ENCODE measurements at regions of chr6 and their contacts with region 1.

Region 1: DNA sequence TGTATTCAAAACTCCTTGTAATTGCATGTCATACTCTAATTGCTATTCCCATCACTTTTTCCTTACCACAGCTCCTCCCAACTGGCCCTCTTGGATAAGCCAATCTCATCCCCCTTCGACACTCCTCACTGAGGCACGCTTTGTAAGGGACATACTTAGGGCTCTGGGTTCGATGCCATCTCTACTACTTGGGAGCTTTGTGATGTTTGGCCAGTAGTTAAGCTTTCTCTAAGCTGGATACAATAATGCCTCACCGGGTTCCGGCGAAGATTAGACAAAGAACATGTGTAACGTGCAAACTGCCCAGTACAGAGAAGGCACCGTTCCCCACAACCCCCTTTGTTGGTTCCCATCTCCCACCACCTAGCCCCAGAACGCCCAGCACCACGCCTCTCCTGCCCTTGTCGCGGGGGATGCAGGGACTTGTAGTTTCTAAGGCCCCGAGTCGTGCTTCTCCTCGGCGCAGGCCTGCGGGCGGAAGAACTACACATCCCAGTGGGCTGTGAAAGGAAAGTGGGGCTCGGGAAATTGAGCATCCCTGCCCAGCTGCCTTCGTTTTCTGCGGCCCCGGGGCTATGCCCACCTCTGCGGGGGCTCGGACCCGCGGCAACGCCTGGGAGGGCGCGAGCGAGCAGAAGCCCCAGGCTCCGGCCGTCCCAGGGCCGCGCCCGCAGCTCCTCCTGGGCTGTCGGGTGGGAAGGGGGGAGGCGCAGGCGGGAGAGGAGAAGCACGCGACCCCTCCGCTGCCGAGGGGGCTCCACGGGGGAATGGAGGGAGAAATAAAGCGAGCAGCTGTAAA is 1.1 kb upstream of the ZDHHC14 start:
- DNase-seq: peak; percentile 83 to 92 (median 85)
- H3K4me3 ChIP-seq: peak overlapping the region; percentile 76 to 83
- H3K4me3 Mint-ChIP-seq: peak overlapping the region; percentile 77 to 91 (median 86)
- H3K27ac ChIP-seq: peak overlapping the region; percentile 66
- H3K27ac Mint-ChIP-seq: peak overlapping the region; percentile 37 to 80 (median 66)
- H3K4me1 ChIP-seq: peaks cover 15% of the 10 kb centered on the region
- H3K4me1 Mint-ChIP-seq: peaks cover 11 to 17% (median 14%) of the 10 kb centered on the region in 4 donors
- H3K27me3 ChIP-seq: no peaks in the 10 kb centered on the region
- H3K27me3 Mint-ChIP-seq: peaks cover 0 to 3% of the 10 kb centered on the region in 2 donors

Region 2: DNA sequence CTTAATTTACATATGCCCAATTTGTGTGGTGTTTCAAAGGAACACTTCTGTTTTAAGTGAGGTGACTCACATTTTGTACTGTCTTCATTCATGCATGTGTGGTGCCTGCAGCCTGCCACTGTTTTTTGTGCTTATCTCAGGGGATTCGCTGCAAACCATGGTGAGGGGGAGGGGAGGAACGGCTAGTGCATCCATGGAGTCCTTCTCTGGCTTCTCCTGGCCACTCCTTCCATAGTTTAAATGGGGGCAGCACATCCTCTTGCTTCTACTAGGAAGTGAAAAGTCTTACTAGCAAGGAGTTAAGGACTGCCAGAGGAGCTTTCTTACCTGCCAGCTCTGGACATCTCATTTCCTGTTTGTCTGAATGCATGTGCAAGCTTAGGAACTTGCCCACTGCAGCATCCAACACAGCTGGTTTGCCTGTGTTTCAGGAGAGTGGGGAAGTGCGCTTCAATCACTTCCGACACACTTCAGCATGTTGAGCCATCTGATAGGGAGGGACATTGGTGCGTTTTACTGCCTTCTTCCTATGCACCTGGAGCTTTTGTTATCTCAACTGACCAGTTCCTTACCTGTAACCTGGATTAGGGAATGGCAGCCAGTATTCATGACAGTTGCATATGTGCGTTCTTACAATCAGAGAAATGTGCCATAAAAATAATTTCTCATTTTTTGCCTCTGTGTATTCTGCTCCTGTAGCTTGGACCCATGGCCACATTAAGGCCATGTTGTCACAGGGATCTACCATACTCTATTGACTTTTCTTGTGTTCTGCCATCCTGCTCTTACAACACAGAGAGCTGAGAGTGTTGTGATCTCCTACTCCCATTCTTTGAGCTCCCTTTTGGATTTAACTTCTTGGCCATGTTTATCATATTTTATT is 391.3 kb before region 1 on chr6:
- CTCF ChIA-PET with region 1: no interaction called
- POLR2A ChIA-PET with region 1: no interaction called
- intact Hi-C with region 1: no loop called
- DNase-seq: no peak
- H3K4me3 ChIP-seq: no peak overlapping the region
- H3K4me3 Mint-ChIP-seq: peak overlapping the region in 1 of 8 donors; percentile 44
- H3K27ac ChIP-seq: no peak overlapping the region
- H3K27ac Mint-ChIP-seq: peak overlapping the region in 4 of 7 donors; percentile 2 to 43 (median 40)
- H3K4me1 ChIP-seq: peaks cover 50% of the 10 kb centered on the region
- H3K4me1 Mint-ChIP-seq: peaks cover 37 to 71% (median 59%) of the 10 kb centered on the region in 4 donors
- H3K27me3 ChIP-seq: no peaks in the 10 kb centered on the region
- H3K27me3 Mint-ChIP-seq: no peaks in the 10 kb centered on the region

Region 3: DNA sequence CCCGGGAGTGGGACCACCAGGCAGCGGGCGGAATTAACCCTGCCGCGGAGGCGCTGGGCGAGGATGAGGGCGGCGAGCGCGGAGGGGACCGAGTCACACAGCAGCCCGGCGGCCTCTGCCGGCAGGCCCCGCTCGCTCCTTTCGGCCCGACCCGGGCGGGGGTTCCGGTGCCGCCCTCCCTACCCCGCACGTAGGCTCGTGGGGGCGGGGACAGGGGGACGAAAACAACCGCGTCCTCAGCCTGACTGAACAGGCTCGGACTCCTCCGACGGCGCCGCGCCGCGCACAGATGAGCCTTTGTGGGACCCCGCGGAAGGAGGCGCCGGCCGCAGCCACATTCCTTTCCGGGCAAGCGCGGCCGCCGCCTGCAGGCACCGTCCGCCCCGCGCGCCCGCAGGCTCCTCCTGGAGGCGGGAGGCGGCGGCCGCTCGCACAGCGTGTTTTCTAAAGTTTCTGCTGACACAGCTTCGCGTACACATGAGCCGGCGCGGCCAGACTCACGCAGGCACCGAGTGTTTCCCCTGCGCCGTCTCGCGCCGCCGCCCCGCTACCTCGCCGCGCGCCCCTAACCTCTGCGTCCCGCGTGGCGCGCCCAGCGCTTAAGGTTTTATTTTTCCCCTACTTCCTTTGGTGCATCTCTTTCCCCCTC is 358.4 kb before region 1 on chr6:
- CTCF ChIA-PET with region 1: no interaction called
- POLR2A ChIA-PET with region 1: interaction called, 4 read pairs
- intact Hi-C with region 1: loop called (anchors 2 kb)
- DNase-seq: peak; percentile 88 to 93 (median 91)
- H3K4me3 ChIP-seq: peak overlapping the region; percentile 54 to 86
- H3K4me3 Mint-ChIP-seq: peak overlapping the region; percentile 95 to 98 (median 96)
- H3K27ac ChIP-seq: peak overlapping the region; percentile 98
- H3K27ac Mint-ChIP-seq: peak overlapping the region; percentile 97 to 100 (median 99)
- H3K4me1 ChIP-seq: peaks cover 31% of the 10 kb centered on the region
- H3K4me1 Mint-ChIP-seq: peaks cover 30 to 55% (median 44%) of the 10 kb centered on the region in 4 donors
- H3K27me3 ChIP-seq: no peaks in the 10 kb centered on the region
- H3K27me3 Mint-ChIP-seq: no peaks in the 10 kb centered on the region

Region 4: DNA sequence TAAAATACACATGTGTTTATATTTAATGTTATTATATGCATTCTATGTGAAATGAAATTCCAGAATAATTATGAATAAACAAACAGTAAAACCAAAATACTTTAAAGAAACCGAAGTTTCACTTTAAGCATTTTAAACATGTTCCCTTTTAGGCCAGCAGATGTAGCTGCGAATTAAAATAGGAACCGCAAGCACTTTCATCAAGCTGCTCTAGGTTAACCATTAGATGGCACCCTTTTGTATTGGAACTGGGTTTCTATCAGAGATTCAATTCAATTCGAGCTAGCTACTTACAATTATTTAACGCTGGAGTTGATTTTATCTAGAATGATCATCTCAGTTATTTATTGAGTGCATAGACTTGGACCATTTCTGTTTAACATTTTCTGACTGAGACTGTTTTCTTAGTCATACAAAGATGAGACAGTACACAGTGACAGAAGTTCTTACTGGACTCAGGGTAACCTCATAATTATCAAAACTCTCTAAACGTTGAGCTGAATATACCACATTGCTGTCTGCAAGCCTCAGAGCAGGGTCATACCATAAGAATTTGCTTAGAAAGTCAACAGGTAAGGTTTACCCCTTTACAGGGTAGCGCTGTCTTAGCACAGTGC is 65.0 kb before region 1 on chr6:
- CTCF ChIA-PET with region 1: interaction called, 4 read pairs
- POLR2A ChIA-PET with region 1: no interaction called
- intact Hi-C with region 1: loop called (anchors 2 kb)
- DNase-seq: peak; percentile 39 to 62 (median 58)
- H3K4me3 ChIP-seq: no peak overlapping the region
- H3K4me3 Mint-ChIP-seq: no peak overlapping the region
- H3K27ac ChIP-seq: no peak overlapping the region
- H3K27ac Mint-ChIP-seq: peak overlapping the region in 4 of 7 donors; percentile 14 to 41 (median 22)
- H3K4me1 ChIP-seq: peaks cover 10% of the 10 kb centered on the region
- H3K4me1 Mint-ChIP-seq: peaks cover 0 to 7% (median 6%) of the 10 kb centered on the region in 4 donors
- H3K27me3 ChIP-seq: no peaks in the 10 kb centered on the region
- H3K27me3 Mint-ChIP-seq: no peaks in the 10 kb centered on the region

Region 5: GRCh38 chr6:157323255-157323965 is 56.4 kb before region 1 on chr6 and contains the start of gene TMEM242:
- CTCF ChIA-PET with region 1: interaction called, 9 read pairs
- POLR2A ChIA-PET with region 1: interaction called, 60 read pairs
- intact Hi-C with region 1: loop called (anchors 1 kb)
- DNase-seq: peak; percentile 77 to 86 (median 83)
- H3K4me3 ChIP-seq: peak within 1 kb of the TSS; percentile 79 to 82
- H3K4me3 Mint-ChIP-seq: peak within 1 kb of the TSS; percentile 94 to 97 (median 96)
- H3K27ac ChIP-seq: peak within 1 kb of the TSS; percentile 62
- H3K27ac Mint-ChIP-seq: peak within 1 kb of the TSS; percentile 89 to 94 (median 92)
- H3K4me1 ChIP-seq: peaks cover 16% of the 10 kb centered on the region
- H3K4me1 Mint-ChIP-seq: peaks cover 13 to 27% (median 17%) of the 10 kb centered on the region in 4 donors
- H3K27me3 ChIP-seq: no peaks in the 10 kb centered on the region
- H3K27me3 Mint-ChIP-seq: peaks cover 5 to 10% of the 10 kb centered on the region in 2 donors
- total RNA-seq, gene TMEM242: 12.7 to 14.1 TPM

Region 6: DNA sequence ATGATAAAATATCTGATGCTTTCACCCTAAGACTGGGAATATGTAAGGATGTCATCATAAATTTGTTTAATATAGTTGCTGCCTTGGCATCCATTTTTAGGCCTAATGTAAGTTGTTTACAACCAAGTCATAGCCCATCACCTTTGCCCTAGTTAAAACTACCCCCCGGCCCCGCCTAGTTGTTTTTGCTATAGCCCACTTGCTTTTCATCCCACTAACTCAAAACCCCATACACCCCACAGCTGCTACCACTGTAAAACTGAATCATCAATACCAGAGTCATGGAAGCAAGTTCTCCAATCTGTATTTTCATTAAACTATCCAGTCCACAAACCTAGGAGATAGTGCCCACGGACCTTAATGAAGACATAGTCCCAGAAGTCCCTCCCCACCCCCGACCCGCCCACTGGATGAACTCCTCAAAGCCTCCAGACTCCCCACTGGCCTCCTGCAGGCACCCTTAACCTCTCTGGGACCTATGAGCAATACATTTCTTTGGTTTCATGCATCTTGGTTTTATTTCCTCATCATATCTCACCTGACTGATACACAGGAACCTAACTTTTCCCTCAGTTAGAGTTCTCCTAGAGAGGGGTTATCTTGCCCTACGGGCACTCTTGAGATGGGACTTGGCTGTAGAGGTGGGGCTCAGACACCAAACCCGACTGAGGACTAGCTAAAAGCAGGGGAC is 11.4 kb before region 1 on chr6:
- CTCF ChIA-PET with region 1: interaction called, 3 read pairs
- POLR2A ChIA-PET with region 1: interaction called, 19 read pairs
- intact Hi-C with region 1: loop called (anchors 1 kb)
- DNase-seq: no peak
- H3K4me3 ChIP-seq: no peak overlapping the region
- H3K4me3 Mint-ChIP-seq: no peak overlapping the region
- H3K27ac ChIP-seq: no peak overlapping the region
- H3K27ac Mint-ChIP-seq: peak overlapping the region in 2 of 7 donors; percentile 42 to 62
- H3K4me1 ChIP-seq: peaks cover 13% of the 10 kb centered on the region
- H3K4me1 Mint-ChIP-seq: peaks cover 9 to 20% (median 12%) of the 10 kb centered on the region in 4 donors
- H3K27me3 ChIP-seq: peaks cover 7% of the 10 kb centered on the region
- H3K27me3 Mint-ChIP-seq: peaks cover 25 to 27% of the 10 kb centered on the region in 2 donors

Region 7: DNA sequence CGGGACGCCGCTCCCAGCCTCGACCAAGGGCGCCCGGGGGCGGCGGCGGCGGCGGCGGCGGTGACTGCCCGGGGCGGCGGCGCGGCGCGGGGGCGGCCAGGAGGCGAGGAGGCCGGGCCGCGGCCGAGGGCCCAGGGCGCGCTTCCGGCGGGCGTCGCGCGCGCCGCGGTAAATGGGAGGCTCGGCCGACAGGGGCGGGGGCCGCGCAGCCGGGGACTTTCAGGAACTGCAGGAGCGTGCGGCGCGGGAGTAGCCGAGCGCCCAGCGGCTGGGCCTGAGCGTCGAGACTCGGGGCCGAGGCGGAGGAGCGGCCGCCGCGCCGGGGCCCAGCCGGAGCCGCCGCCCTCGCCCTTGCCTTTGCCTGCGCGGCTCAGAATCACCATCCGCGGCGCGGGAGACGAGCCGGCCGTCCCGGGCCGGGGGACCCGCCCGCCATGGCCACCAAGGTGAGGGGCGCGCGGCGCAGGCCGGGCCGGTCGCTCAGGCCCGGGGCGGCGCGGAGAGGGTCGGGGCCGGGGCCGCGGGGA is 443.2 kb after region 1 on chr6 and contains the start of gene SNX9:
- CTCF ChIA-PET with region 1: no interaction called
- POLR2A ChIA-PET with region 1: no interaction called
- intact Hi-C with region 1: loop called (anchors 5 kb)
- DNase-seq: peak; percentile 53 to 66 (median 58)
- H3K4me3 ChIP-seq: peak within 1 kb of the TSS; percentile 21 to 62
- H3K4me3 Mint-ChIP-seq: peak within 1 kb of the TSS; percentile 91 to 99 (median 96)
- H3K27ac ChIP-seq: peak within 1 kb of the TSS; percentile 78
- H3K27ac Mint-ChIP-seq: peak within 1 kb of the TSS; percentile 93 to 99 (median 98)
- H3K4me1 ChIP-seq: peaks cover 18% of the 10 kb centered on the region
- H3K4me1 Mint-ChIP-seq: peaks cover 18 to 32% (median 22%) of the 10 kb centered on the region in 4 donors
- H3K27me3 ChIP-seq: no peaks in the 10 kb centered on the region
- H3K27me3 Mint-ChIP-seq: peaks cover 0 to 1% of the 10 kb centered on the region in 2 donors
- total RNA-seq, gene SNX9: 21.5 to 21.9 TPM

Region 8: DNA sequence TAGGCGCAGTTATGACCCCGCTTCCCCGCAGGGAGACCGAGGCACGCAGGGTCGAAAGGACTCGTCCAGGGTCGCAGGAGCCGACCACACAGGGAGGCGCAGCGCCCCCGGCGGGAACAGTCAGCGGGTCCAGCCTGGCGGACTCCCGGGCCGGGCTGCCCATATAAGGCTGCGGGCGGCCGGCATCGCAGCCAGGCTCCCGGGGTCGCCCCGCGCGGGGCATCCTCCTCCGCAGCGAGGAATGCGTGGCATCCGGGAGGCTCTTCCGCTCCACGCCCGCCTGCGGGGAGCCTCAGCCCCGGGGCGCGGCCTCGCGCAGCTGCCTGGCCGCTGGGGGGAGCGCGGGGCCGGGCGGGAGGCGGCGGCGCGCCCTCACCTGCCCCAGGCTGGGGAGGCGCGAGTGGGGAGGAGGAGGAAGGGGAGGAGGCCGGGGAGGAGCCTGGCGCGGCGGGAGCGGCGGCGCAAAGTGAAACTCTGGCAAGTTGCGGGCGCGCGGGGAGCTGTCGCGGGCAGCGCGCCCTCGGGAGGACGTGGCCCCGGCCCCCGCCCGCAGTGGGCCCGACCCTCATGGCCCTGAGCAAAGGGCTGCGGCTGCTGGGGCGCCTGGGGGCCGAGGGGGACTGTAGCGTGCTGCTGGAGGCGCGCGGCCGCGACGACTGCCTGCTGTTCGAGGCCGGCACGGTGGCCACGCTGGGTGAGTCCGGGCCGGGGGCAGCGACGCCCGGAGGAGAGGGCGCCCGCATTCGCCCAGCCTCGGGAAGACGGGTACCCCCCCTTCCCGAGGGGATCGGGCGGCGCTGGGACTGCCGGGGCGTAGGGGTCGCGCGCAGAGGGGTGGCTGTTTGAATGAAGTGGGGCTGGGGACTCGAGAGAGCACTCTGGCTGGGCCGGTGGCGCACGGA is 601.8 kb after region 1 on chr6 and contains the start of gene SYNJ2:
- CTCF ChIA-PET with region 1: no interaction called
- POLR2A ChIA-PET with region 1: no interaction called
- intact Hi-C with region 1: loop called (anchors 5 kb)
- DNase-seq: peak; percentile 86 to 89 (median 87)
- H3K4me3 ChIP-seq: peak within 1 kb of the TSS; percentile 76 to 88
- H3K4me3 Mint-ChIP-seq: peak within 1 kb of the TSS; percentile 88 to 94 (median 92)
- H3K27ac ChIP-seq: peak within 1 kb of the TSS; percentile 71
- H3K27ac Mint-ChIP-seq: peak within 1 kb of the TSS; percentile 85 to 93 (median 90)
- H3K4me1 ChIP-seq: peaks cover 44% of the 10 kb centered on the region
- H3K4me1 Mint-ChIP-seq: peaks cover 24 to 53% (median 39%) of the 10 kb centered on the region in 4 donors
- H3K27me3 ChIP-seq: no peaks in the 10 kb centered on the region
- H3K27me3 Mint-ChIP-seq: no peaks in the 10 kb centered on the region
- total RNA-seq, gene SYNJ2: 17.2 to 17.4 TPM

Region 9: DNA sequence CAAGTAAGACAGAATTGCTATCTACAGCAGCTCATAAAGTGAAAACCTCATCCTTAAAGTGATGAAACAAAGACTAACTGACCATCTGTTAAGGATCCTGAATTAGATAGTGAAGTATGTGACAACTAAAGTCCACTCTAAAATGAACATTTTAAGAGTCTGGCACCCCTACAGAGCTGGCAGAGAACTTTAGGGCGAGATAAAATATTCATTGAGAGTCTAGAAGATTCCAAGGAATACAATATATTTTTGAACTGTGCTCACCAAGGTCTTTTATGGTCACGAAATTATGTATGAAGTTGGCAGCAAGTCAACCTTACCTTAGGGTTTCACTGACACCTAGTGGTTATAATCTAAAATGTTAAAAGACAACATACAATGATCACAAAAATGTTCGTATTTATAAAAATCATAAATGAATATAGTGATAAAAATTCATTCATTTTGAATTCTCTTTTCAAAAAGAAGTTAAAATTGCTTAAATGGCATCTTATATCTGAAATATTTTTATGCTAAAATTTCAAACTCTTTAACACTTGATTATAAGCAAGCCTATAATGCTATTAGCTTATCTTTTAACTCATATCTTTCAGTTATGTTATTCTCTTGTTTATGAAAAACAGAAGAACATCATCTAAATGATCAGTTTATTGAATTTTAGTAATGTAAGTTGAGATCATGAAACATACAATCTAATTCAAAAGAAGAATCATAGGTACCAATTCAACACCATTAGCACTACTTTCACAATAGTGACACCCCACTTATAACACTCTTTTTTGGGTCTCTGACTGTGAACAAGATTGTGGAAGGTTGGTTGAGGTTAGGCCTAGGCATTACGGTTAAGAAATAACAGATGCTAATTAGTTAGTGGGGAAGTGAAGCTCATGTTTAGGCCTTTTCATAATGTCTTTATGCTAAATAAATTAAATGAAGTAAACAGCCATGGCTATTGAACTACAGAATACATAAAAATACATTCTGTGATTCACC is 1592.7 kb after region 1 on chr6:
- CTCF ChIA-PET with region 1: no interaction called
- POLR2A ChIA-PET with region 1: no interaction called
- intact Hi-C with region 1: no loop called
- DNase-seq: peak in 4 of 5 donors; percentile 57 to 66 (median 60)
- H3K4me3 ChIP-seq: no peak overlapping the region
- H3K4me3 Mint-ChIP-seq: no peak overlapping the region
- H3K27ac ChIP-seq: no peak overlapping the region
- H3K27ac Mint-ChIP-seq: peak overlapping the region in 2 of 7 donors; percentile 31 to 47
- H3K4me1 ChIP-seq: no peaks in the 10 kb centered on the region
- H3K4me1 Mint-ChIP-seq: peaks cover 0 to 3% (median 0%) of the 10 kb centered on the region in 4 donors
- H3K27me3 ChIP-seq: no peaks in the 10 kb centered on the region
- H3K27me3 Mint-ChIP-seq: no peaks in the 10 kb centered on the region

Measured in CD4-positive, alpha-beta memory T cell (primary cell).